Calu3 (cell line): ENCODE measurements at regions of chr4 and their contacts with region 1.

Region 1: DNA sequence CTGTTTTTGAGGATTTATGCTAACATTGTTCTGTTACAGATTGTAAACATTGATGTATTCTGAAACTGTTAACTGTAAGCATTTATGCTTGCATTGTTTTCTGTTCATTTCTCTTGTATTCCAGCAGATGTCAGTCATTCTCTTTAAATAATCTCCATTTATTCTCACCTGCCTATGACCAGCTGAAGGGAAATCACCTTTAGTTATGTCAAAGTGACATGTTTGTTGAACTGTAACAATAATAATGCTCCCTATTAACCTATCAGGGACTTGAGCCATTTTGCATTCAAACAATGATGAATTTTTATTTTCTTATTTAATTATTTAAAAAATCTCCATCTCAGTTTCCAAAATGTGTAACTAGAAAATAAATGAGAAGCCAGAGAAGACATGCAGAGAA is 58.0 kb downstream of the SPCS3 start:
- DNase-seq: no peak
- H3K4me3 Mint-ChIP-seq: no peak overlapping the region
- H3K27ac Mint-ChIP-seq: no peak overlapping the region
- H3K4me1 Mint-ChIP-seq: no peaks in the 10 kb centered on the region
- H3K27me3 Mint-ChIP-seq: no peaks in the 10 kb centered on the region
- CTCF ChIP-seq: no peak

Region 2: DNA sequence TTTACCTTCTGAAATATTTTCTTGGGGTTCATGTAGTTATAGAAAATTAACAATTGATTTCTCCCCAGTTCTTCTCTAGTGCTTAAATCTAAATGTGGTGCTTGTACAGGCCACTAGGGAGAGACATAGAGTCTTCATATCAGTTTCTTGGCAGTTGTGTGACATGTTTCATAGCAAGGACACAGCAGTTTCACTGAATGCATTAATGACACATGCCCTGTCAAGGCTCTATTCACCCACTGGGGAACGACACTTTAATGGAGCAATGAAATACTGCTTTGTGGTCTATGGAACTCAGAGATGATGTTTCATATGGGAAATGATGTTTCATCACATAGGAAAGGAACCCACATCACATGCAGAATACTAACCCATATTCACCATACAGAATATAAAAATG is 412.2 kb after region 1 on chr4:
- CTCF ChIA-PET with region 1: interaction called, 3 read pairs
- intact Hi-C with region 1: loop called (anchors 2 kb)
- DNase-seq: no peak
- H3K4me3 Mint-ChIP-seq: no peak overlapping the region
- H3K27ac Mint-ChIP-seq: no peak overlapping the region
- H3K4me1 Mint-ChIP-seq: peaks cover 19% of the 10 kb centered on the region
- H3K27me3 Mint-ChIP-seq: no peaks in the 10 kb centered on the region
- CTCF ChIP-seq: peak; percentile 47

Region 3: DNA sequence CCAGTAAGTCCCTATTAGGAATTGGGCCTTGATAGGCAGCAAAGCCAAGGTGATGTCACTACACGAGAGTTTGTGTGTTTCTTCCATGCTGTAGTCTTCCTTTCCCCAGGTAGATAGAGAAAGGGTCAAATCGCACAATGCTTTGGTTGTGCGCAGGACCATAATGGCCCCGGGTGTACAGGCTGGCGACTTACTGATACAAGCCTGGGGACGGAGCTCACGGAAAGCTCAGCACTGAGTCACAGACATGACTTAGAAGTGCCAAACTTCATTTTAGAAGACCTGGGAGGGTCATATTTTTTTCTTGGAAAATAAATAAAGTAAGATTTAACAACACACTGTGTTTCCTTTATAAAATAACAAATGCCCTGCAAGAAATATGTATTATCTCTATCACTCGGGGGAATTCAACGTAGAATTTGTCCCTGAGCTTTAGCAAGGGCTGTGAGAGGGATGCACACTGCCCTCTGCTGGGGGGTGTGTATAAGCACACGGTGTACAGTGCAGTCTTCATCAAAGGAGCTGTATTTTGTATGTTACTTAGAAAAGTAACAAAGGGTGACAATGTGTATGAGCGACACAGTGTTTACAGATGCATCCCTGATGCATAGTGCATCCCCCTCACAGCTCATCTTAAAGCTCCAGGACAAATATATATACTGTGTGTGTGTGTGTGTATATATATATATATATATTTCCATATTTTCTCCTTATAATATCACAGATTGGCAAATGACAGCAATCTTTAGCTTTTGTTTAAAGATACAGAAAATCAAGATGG is 669.5 kb after region 1 on chr4:
- CTCF ChIA-PET with region 1: interaction called, 18 read pairs
- intact Hi-C with region 1: loop called (anchors 1 kb)
- DNase-seq: peak; percentile 73
- H3K4me3 Mint-ChIP-seq: no peak overlapping the region
- H3K27ac Mint-ChIP-seq: no peak overlapping the region
- H3K4me1 Mint-ChIP-seq: no peaks in the 10 kb centered on the region
- H3K27me3 Mint-ChIP-seq: no peaks in the 10 kb centered on the region
- CTCF ChIP-seq: peak; percentile 59

Region 4: GRCh38 chr4:177339477-177340374 is 961.9 kb after region 1 on chr4:
- CTCF ChIA-PET with region 1: no interaction called
- intact Hi-C with region 1: loop called (anchors 5 kb)
- DNase-seq: no peak
- H3K4me3 Mint-ChIP-seq: no peak overlapping the region
- H3K27ac Mint-ChIP-seq: no peak overlapping the region
- H3K4me1 Mint-ChIP-seq: no peaks in the 10 kb centered on the region
- H3K27me3 Mint-ChIP-seq: no peaks in the 10 kb centered on the region
- CTCF ChIP-seq: peak; percentile 27